ENCODE measurements at regions of chr3 and their contacts with region 1.

Region 1: DNA sequence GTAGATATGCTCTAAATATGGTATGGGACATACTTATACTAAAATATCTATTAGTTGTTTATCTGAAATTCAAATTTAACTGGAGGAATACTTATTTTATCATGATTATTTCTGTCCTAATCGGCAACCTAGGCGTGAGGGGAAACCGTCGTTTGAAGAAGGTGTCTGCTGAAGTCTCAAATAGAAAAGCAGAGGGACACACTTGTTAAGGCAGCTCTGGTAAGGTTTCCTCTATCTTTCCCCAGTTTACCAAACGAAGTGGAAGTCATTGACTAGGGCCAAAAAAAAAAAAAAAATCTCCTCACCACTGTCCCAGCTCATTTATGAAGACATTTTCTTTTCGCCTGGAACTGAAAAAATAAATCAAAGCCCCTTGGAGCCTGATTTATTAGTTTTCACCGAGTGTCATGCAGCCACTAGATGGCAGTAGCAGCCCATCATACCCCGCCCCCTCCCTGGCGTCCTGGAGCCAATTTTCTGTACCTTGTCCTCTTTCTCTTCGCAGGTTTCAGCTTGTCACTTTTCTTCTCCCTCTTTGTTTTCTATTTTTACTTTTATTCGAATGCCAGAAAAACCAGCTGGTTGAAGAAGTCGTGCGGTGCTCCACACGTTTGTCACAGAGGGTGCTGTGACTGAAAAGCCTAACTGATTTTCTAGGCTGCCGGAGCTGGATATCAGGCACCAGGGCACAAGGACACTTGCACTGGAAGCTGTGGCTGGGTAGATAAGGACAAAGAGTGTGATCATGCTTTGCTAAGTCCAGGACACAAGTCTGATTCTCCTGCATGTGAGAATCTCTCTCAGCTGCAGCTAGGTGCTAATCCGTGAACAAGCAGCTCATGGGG is 238.7 kb downstream of the ZPLD1 start:
- DNase-seq: peak; percentile 64
- H3K4me3 ChIP-seq: peak overlapping the region; percentile 33 to 37; a peak in 3 of 4 replicates
- H3K27ac ChIP-seq: peak overlapping the region in 1 of 2 experiments; percentile 93; a peak in 2 of 4 replicates
- H3K4me1 ChIP-seq: peaks cover 0 to 10% of the 10 kb centered on the region in 2 experiments; a peak in 2 of 4 replicates
- H3K27me3 ChIP-seq: no peaks in the 10 kb centered on the region
- CTCF ChIP-seq: peak; percentile 95
- EP300 ChIP-seq: peak in 1 of 2 experiments; percentile 53; a peak in 1 of 4 replicates
- RAD21 ChIP-seq: peak; percentile 92

Region 2: GRCh38 chr3:102661707-102662497 is 11.6 kb before region 1 on chr3:
- CTCF ChIA-PET with region 1: interaction called, 10 read pairs
- POLR2A ChIA-PET with region 1: no interaction called
- DNase-seq: no peak
- H3K4me3 ChIP-seq: no peak overlapping the region
- H3K27ac ChIP-seq: no peak overlapping the region
- H3K4me1 ChIP-seq: no peaks in the 10 kb centered on the region
- H3K27me3 ChIP-seq: no peaks in the 10 kb centered on the region
- CTCF ChIP-seq: no peak
- EP300 ChIP-seq: no peak
- RAD21 ChIP-seq: no peak

Region 3: GRCh38 chr3:102691507-102691906 is 18.0 kb after region 1 on chr3:
- CTCF ChIA-PET with region 1: interaction called, 14 read pairs
- POLR2A ChIA-PET with region 1: no interaction called
- DNase-seq: no peak
- H3K4me3 ChIP-seq: no peak overlapping the region
- H3K27ac ChIP-seq: no peak overlapping the region
- H3K4me1 ChIP-seq: no peaks in the 10 kb centered on the region; a peak in 2 of 4 replicates
- H3K27me3 ChIP-seq: no peaks in the 10 kb centered on the region
- CTCF ChIP-seq: no peak
- EP300 ChIP-seq: no peak
- RAD21 ChIP-seq: no peak

Region 4: GRCh38 chr3:102715030-102715697 is 41.7 kb after region 1 on chr3:
- CTCF ChIA-PET with region 1: interaction called, 13 read pairs
- POLR2A ChIA-PET with region 1: no interaction called
- DNase-seq: no peak
- H3K4me3 ChIP-seq: no peak overlapping the region
- H3K27ac ChIP-seq: peak overlapping the region; percentile 31 to 95; a peak in 3 of 4 replicates
- H3K4me1 ChIP-seq: peaks cover 6 to 8% of the 10 kb centered on the region in 2 experiments; a peak in 2 of 4 replicates
- H3K27me3 ChIP-seq: no peaks in the 10 kb centered on the region
- CTCF ChIP-seq: no peak
- EP300 ChIP-seq: no peak
- RAD21 ChIP-seq: no peak

Region 5: DNA sequence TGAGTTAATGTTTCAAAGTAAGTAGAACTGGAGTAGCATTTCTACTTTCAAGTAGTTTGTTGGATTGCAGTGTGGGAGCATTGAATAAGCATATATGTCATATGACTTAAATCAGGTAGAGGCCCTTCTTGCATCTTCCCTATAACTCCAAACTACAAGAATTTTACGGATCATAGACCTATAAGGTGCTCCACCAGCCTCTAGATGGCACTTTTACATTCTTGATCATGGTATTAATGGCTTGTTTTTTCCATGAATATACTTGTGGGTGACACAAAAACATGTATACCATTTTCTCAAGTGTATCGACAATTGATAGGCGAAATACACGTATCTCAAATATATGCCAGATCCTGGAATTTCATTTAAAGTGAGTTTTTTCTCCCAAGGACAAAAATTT is 72.4 kb after region 1 on chr3:
- CTCF ChIA-PET with region 1: interaction called, 37 read pairs
- POLR2A ChIA-PET with region 1: no interaction called
- DNase-seq: no peak
- H3K4me3 ChIP-seq: no peak overlapping the region
- H3K27ac ChIP-seq: no peak overlapping the region
- H3K4me1 ChIP-seq: no peaks in the 10 kb centered on the region; a peak in 1 of 4 replicates
- H3K27me3 ChIP-seq: no peaks in the 10 kb centered on the region
- CTCF ChIP-seq: peak; percentile 40; the same call in 1 of the 2 replicates
- EP300 ChIP-seq: no peak
- RAD21 ChIP-seq: peak; percentile 69

Region 6: DNA sequence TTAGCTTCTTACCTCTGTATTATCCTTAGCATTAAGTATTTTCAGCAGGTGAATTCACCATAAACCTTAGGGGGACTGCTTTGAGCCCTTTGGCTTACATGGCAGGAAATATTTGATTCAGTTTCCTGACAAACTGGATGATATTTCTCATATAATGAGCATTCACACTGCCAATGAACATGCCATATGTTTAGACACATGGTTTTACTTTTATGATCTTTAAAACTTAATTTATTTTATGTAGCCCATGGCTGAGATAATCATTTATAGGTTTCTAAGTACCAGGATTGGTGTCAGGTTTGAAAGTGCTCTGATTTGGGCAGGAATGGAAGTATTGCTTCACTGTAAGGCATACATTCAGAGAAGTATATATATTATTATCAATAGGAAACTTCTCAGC is 80.4 kb after region 1 on chr3:
- CTCF ChIA-PET with region 1: interaction called, 37 read pairs
- POLR2A ChIA-PET with region 1: interaction called, 3 read pairs
- DNase-seq: no peak
- H3K4me3 ChIP-seq: no peak overlapping the region
- H3K27ac ChIP-seq: peak overlapping the region in 1 of 2 experiments; percentile 53; a peak in 1 of 4 replicates
- H3K4me1 ChIP-seq: peaks cover 0 to 3% of the 10 kb centered on the region in 2 experiments; a peak in 2 of 4 replicates
- H3K27me3 ChIP-seq: no peaks in the 10 kb centered on the region
- CTCF ChIP-seq: no peak
- EP300 ChIP-seq: peak in 1 of 2 experiments; percentile 60; a peak in 1 of 4 replicates
- RAD21 ChIP-seq: no peak; the same call in 1 of the 2 replicates

Region 7: GRCh38 chr3:103295974-103296570 is 622.6 kb after region 1 on chr3:
- CTCF ChIA-PET with region 1: interaction called, 13 read pairs
- POLR2A ChIA-PET with region 1: no interaction called
- DNase-seq: peak; percentile 5
- H3K4me3 ChIP-seq: no peak overlapping the region
- H3K27ac ChIP-seq: no peak overlapping the region
- H3K4me1 ChIP-seq: no peaks in the 10 kb centered on the region; a peak in 1 of 4 replicates
- H3K27me3 ChIP-seq: no peaks in the 10 kb centered on the region
- CTCF ChIP-seq: peak; percentile 66
- EP300 ChIP-seq: no peak
- RAD21 ChIP-seq: peak; percentile 72

Region 8: DNA sequence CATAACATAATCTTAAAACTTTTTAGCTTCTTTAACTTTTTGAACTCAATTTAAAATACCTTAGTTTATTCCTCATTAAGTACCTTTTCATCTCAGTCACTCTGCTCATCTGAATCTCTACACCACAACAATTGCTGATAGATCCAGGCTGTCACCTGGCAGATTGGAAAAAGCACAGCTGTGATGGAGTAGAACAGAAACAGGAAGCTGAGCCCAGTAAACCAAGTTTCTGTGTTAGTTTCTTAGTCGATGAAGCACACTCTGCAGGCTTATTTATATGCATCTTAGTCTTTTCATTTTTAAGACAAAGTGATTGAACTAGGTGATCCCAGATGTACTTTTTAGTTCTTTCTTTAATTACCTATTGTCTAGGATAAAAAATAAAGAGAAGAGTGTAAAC is 1295.3 kb after region 1 on chr3:
- CTCF ChIA-PET with region 1: no interaction called
- POLR2A ChIA-PET with region 1: no interaction called
- DNase-seq: peak; percentile 3
- H3K4me3 ChIP-seq: no peak overlapping the region
- H3K27ac ChIP-seq: no peak overlapping the region; a peak in 1 of 4 replicates
- H3K4me1 ChIP-seq: no peaks in the 10 kb centered on the region; a peak in 1 of 4 replicates
- H3K27me3 ChIP-seq: no peaks in the 10 kb centered on the region
- CTCF ChIP-seq: no peak
- EP300 ChIP-seq: no peak
- RAD21 ChIP-seq: no peak

Measured in SK-N-SH (cell line).